Dendritic cell treated with granulocyte-macrophage colony-stimulating factor and Interleukin-4, amounts not matched to agents 40 ng/mL and 50 ng/mL, for 4 days (primary cell): ENCODE measurements at regions of chr15 and their contacts with region 1.

Region 1: DNA sequence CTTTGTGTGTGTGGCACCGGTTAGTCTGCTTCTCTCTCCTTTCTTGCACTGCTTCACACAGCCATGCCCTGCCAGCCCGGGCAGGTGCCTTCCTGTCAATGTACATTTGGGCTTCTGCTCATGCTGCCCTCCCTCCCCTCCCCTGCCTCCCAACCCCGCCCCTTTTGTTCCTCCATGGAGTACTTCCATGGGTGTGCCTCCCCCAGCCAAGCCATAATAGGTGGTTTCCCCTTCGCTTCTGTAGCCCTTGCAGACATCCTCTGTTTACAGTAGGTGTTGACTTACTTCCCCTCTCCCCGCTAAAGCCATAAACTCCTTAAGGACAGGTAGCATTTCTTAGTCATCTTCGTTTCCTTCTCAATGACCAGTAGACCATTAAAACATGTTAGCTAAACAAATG is 31.8 kb upstream of the CRTC3 start:
- H3K4me3 Mint-ChIP-seq: no peak overlapping the region
- H3K27ac Mint-ChIP-seq: no peak overlapping the region
- H3K4me1 Mint-ChIP-seq: peaks cover 18% of the 10 kb centered on the region
- H3K27me3 Mint-ChIP-seq: no peaks in the 10 kb centered on the region

Region 2: DNA sequence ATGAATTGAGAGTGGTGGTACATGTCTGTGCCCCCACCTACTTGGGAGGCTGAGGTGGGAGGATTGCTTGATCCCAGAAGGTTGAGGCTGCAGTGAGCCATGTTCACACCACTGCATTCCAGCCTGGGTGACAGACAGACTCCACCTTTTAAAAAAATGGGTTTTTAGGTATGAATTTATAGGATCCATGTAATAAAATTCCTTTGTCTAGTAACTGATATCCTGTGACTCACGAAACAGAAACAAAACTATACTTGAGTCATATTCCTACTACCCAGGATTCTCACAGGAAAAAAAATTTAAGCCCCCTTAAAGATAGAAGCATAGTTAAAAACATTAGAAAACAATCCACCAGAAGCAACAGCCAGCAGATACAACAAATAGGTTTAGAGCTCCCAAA is 21.8 kb after region 1 on chr15:
- intact Hi-C with region 1: no loop called
- H3K4me3 Mint-ChIP-seq: no peak overlapping the region
- H3K27ac Mint-ChIP-seq: no peak overlapping the region
- H3K4me1 Mint-ChIP-seq: peaks cover 9% of the 10 kb centered on the region
- H3K27me3 Mint-ChIP-seq: peaks cover 1% of the 10 kb centered on the region

Region 3: DNA sequence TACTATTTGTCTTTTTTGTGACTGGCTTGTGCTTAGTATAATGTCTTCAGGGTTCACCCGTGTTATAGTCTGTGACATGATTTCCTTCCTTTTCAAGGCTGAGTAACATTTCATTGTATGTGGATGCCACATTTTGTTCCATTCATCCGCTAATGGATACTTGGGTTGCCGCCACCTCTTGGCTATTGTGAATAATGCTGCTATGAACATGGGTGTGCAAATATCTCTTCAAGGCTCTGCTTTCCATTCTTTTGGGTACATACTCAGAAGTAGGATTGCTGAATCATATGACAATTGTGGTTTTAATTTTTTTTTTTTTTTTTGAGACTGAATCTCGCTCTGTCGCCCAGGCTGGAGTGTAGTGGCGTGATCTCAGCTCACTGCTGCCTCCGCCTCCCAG is 47.2 kb after region 1 on chr15:
- intact Hi-C with region 1: loop called (anchors 10 kb)
- H3K4me3 Mint-ChIP-seq: no peak overlapping the region
- H3K27ac Mint-ChIP-seq: no peak overlapping the region
- H3K4me1 Mint-ChIP-seq: peaks cover 15% of the 10 kb centered on the region
- H3K27me3 Mint-ChIP-seq: no peaks in the 10 kb centered on the region

Region 4: GRCh38 chr15:90603893-90604292 is 106.0 kb after region 1 on chr15:
- intact Hi-C with region 1: loop called (anchors 5 kb)
- H3K4me3 Mint-ChIP-seq: no peak overlapping the region
- H3K27ac Mint-ChIP-seq: no peak overlapping the region
- H3K4me1 Mint-ChIP-seq: peaks cover 13% of the 10 kb centered on the region
- H3K27me3 Mint-ChIP-seq: no peaks in the 10 kb centered on the region